Posterior vena cava (tissue), 2 donors: ENCODE measurements at regions of chr5 and their contacts with region 1.

Region 1: DNA sequence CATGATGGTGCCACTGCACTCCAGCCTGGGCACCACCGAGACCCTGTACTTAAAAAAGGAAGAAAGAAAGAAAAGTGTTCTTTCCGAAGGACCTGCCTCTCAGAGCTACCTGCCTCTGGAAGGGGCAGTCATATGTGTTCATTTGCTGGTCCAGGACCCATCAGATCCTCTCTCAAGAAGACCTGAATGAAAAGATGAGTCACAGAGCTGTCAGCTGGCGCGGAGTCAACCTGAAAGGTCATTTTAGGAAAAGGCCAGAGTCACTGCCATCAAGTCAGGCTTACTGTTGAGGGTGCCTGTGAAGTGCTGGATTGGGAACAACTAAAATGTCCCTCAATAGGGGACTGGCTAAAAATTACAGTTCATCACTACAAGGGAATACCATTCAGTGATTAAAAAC is 14.9 kb upstream of the HRH2 start:
- DNase-seq: no peak

Region 2: DNA sequence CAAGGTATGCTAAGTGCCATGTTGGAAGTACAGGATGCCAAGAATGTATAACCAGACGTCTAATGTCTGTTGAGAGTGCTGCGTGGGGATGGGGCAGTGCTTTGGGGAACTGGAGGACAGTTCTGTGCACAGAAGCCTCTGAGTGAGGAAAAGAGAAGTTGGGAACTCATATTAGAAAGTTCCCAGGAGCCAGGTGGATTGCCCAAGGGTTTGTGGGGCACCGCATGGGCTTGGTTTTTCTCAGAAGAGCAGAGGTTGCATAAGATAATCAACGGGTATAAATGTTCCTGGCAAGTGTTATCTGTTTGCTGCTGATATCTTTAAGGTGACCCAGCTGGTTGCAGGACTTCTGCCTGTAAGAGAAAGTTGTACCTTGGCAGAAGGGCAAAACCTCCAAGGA is 28.0 kb after region 1 on chr5:
- intact Hi-C with region 1: loop called in 1 of 2 experiments (anchors 1 kb)
- DNase-seq: no peak